ENCODE measurements at regions of chr17 and their contacts with region 1.

Region 1: DNA sequence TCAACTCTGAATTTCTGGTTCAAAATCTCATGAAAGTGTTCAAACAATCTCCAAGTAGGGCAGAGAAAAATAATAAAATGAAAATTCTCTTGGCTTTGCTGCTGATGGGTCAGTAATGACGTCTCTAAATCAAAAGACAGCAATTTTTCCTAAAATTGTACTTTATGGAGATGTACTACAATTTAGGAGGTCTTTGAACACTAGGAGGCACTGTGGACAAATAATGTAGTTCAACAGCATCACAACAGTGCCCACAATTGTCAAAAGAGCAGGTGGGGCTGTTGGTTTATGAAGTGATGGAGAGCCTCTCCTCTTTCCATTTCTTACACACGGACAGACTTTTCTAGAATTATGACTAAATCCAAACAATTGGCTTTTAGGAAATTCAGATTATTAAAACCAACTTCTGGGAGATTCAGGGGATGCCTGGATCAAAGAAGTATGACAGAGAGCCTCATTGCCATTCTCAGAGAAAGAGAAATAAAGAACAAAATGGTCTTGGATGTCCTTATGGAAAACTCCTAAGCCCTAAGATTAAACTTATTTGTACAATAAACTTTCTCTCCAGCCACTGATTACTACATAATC is 23.8 kb downstream of the EZH1 start:
- DNase-seq: no peak
- ATAC-seq: peak; percentile 85
- H3K4me3 ChIP-seq: no peak overlapping the region
- H3K27ac ChIP-seq: no peak overlapping the region
- H3K4me1 ChIP-seq: no peaks in the 10 kb centered on the region
- H3K27me3 ChIP-seq: no peaks in the 10 kb centered on the region

Region 2: DNA sequence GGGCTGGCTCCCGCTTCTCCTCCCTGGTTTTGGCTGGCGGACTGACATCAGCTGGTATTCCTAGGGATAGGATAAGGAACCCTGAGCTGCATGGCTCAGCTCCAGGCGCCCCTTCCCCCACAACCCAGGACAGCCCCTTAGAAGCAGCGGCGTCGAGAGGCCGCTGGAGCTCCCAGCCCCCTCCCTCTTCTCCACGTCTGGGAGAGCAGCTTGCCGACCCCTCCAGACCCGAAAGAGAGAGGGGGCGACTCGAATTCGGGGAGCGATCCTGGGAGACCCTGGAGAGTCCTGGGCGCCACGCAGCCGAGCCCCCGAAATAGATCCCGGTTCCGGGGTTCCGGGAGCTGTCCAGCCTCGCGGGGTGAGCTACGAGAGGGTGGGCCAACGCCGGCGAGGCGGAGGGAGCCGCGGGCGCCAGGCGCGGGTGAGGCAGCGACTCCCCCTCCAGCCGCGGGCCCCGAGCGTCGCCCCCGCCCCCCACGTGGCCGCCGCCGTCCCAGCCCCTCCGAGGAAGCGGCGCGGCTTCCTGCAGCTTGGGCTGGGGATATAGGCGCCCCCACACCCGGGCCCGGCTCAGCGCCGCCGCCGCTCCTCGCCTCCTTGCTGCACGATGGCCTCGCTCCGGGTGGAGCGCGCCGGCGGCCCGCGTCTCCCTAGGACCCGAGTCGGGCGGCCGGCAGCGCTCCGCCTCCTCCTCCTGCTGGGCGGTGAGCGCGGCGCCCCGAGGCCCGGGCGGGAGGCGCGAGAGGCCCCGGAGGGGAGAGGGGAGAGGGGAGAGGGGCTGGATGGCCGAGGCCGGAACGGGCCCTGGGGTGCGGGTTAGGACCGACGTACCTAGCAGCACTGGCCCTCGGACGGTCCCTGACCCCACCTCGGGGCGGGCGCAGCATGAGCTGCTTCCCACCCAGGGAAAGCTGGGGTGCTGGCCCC is 39.8 kb after region 1 on chr17 and contains the start of gene RAMP2:
- intact Hi-C with region 1: loop called (anchors 2 to 5 kb)
- DNase-seq: peak; percentile 61 to 83
- ATAC-seq: peak; percentile 53
- H3K4me3 ChIP-seq: peak within 1 kb of the TSS; percentile 23 to 39
- H3K27ac ChIP-seq: no peak within 1 kb of the TSS
- H3K4me1 ChIP-seq: no peaks in the 10 kb centered on the region
- H3K27me3 ChIP-seq: no peaks in the 10 kb centered on the region
- total RNA-seq, gene RAMP2: 27.1 to 77.7 TPM

Region 3: GRCh38 chr17:42819944-42820535 is 99.0 kb after region 1 on chr17:
- intact Hi-C with region 1: loop called in 1 of 2 experiments (anchors 5 kb)
- DNase-seq: peak; percentile 62 to 83
- ATAC-seq: no peak
- H3K4me3 ChIP-seq: no peak overlapping the region
- H3K27ac ChIP-seq: no peak overlapping the region
- H3K4me1 ChIP-seq: peaks cover 2 to 3% of the 10 kb centered on the region in 2 donors
- H3K27me3 ChIP-seq: no peaks in the 10 kb centered on the region

Region 4: GRCh38 chr17:42937712-42938596 is 216.9 kb after region 1 on chr17:
- intact Hi-C with region 1: loop called in 1 of 2 experiments (anchors 10 kb)
- DNase-seq: peak in 1 of 2 donors; percentile 52
- ATAC-seq: peak; percentile 66
- H3K4me3 ChIP-seq: no peak overlapping the region
- H3K27ac ChIP-seq: no peak overlapping the region
- H3K4me1 ChIP-seq: no peaks in the 10 kb centered on the region
- H3K27me3 ChIP-seq: no peaks in the 10 kb centered on the region

Measured in aorta (tissue), 5 donors.